Esophagus muscularis mucosa (tissue), 4 donors: ENCODE measurements at regions of chr1 and their contacts with region 1.

Region 1: DNA sequence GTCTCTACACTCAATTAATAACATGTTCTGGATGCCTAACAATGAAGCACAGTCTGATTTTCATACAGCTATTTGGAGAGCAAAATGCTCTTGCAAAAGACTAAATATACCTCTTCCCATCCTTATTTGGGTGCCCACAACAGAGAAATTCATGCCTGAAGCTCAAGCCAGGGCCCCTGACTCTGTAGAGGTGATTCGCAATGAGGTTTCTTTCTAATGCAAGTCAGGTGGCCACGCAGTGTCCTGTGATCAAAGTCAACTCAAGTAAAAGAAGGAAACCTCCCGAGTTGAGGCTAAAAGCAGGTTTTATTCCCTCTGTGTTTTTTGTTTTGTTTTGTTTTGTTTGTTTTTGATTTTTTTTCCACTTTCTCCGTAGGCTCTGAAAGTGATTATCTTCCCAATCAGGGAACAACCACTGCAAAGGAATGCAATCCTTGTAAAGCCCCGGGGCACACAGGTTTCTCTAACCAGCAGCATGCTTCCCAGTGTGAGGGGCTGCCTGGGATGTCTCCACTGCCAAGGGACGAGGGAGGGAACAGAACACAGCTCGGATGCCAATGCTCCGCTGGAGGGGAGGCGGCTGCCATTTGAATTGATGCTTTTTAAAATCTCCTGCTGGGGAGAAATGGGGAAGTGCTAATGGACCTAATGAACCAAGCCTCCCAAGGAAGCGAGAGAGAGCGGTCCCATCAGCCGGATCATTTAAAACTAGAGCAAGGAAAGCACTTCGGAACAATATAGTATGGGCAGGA is 73.8 kb upstream of the SSX2IP start:
- DNase-seq: no peak
- H3K4me3 ChIP-seq: no peak overlapping the region
- H3K27ac ChIP-seq: no peak overlapping the region
- H3K4me1 ChIP-seq: peaks cover 0 to 7% (median 4%) of the 10 kb centered on the region in 4 donors
- H3K27me3 ChIP-seq: peaks cover 0 to 6% (median 0%) of the 10 kb centered on the region in 4 donors
- CTCF ChIP-seq: no peak
- EP300 ChIP-seq: no peak
- POLR2A ChIP-seq: no peak

Region 2: GRCh38 chr1:84143796-84144565 is 620.1 kb before region 1 on chr1 and contains the start of gene PRKACB:
- intact Hi-C with region 1: loop called (anchors 10 kb)
- DNase-seq: no peak
- H3K4me3 ChIP-seq: peak within 1 kb of the TSS in 3 of 4 donors; percentile 5 to 21 (median 15)
- H3K27ac ChIP-seq: peak within 1 kb of the TSS in 1 of 4 donors; percentile 14
- H3K4me1 ChIP-seq: no peaks in the 10 kb centered on the region
- H3K27me3 ChIP-seq: no peaks in the 10 kb centered on the region
- CTCF ChIP-seq: no peak
- EP300 ChIP-seq: no peak
- POLR2A ChIP-seq: no peak
- total RNA-seq, gene PRKACB: 44.4 to 59.4 (median 52.3) TPM

Region 3: DNA sequence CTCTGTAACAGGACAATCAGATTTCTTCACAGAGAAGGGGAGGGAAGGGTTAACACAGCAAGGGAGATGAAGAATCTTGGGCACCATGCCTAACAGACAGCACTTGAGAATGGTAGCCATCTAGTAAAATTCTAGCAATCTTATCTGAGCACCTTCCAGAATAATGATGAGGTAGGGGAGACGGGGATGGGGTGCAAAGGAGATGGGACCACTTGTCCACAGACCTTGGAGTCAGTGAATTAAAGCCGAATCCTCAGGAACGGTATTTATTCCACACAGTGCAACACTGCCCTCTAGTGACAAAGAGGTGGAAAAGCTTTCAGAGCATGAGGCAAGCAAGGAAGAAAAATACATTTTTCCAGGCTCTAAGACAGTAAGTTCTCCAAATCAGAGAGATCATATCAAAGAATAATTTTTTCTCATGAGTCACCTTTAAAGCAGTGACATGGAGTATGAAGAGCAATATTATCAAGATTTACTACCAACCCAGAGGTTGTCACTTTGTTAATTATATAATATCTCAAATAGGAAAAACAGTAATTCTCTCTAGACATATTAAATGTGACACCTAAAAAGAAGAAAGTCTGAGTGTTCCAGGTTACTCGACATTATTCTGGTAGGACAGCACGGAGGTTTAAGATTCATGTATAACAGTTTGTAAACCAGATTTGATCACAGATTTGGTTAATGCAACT is 172.2 kb after region 1 on chr1:
- intact Hi-C with region 1: loop called (anchors 10 kb)
- DNase-seq: no peak
- H3K4me3 ChIP-seq: no peak overlapping the region
- H3K27ac ChIP-seq: no peak overlapping the region
- H3K4me1 ChIP-seq: peaks cover 0 to 17% (median 2%) of the 10 kb centered on the region in 4 donors
- H3K27me3 ChIP-seq: no peaks in the 10 kb centered on the region
- CTCF ChIP-seq: peak; percentile 77 to 90 (median 84)
- EP300 ChIP-seq: no peak
- POLR2A ChIP-seq: no peak